Lower leg skin (tissue), 4 donors: ENCODE measurements at regions of chr5 and their contacts with region 1.

Region 1: DNA sequence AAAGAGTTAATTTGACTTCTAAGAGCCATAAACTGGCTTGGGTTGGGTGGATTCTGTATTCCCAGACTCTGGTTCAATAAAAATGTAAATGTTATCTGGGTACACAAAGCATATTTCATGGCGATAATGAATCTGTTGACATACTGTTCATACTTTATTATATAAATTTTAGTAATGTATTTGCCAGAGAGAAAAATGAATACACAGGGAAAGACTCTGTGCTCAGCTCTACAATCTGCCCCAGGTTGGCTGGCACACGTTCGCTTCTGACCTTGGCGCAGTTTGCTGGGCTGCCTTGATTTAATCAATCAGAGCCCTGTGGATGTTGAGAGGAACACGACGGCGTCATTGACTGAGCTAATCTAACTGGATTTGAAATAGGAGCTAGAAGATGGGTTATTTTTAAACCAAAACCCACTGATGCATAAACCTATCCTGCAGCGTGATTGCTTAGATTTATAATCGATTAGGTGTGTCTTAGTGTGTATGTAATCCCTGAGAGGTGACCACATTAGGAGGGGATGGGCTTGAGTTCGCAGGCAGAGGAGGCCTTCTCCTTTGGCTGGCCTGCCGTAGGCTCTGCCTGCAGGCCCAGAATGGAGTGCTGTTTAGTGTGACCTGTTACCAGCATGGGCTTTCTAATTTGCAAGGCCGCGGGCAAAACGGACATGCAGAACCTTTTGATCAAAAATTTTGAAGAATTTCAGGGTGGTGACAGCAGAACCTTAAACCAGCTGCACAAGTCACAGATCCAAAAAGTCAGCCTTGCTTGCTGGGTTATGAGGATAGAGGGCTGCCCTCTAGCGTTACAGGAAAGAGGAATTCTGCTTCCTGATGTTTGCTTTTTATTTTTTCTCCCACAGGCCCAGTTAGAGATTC is 3.9 kb upstream of the ADCY2 start:
- DNase-seq: peak in 1 of 2 donors; percentile 50
- H3K4me3 ChIP-seq: no peak overlapping the region
- CTCF ChIP-seq: no peak
- POLR2A ChIP-seq: no peak

Region 2: GRCh38 chr5:5826911-5827310 is 1565.1 kb before region 1 on chr5:
- intact Hi-C with region 1: no loop called
- DNase-seq: no peak
- H3K4me3 ChIP-seq: no peak overlapping the region
- CTCF ChIP-seq: no peak
- POLR2A ChIP-seq: no peak

Region 3: GRCh38 chr5:6765612-6766525 is 626.2 kb before region 1 on chr5:
- intact Hi-C with region 1: loop called (anchors 10 kb)
- DNase-seq: peak; percentile 69 to 95
- H3K4me3 ChIP-seq: no peak overlapping the region
- CTCF ChIP-seq: no peak
- POLR2A ChIP-seq: no peak

Region 4: GRCh38 chr5:6886866-6887265 is 505.2 kb before region 1 on chr5:
- intact Hi-C with region 1: no loop called
- DNase-seq: no peak
- H3K4me3 ChIP-seq: no peak overlapping the region
- CTCF ChIP-seq: no peak
- POLR2A ChIP-seq: no peak

Region 5: DNA sequence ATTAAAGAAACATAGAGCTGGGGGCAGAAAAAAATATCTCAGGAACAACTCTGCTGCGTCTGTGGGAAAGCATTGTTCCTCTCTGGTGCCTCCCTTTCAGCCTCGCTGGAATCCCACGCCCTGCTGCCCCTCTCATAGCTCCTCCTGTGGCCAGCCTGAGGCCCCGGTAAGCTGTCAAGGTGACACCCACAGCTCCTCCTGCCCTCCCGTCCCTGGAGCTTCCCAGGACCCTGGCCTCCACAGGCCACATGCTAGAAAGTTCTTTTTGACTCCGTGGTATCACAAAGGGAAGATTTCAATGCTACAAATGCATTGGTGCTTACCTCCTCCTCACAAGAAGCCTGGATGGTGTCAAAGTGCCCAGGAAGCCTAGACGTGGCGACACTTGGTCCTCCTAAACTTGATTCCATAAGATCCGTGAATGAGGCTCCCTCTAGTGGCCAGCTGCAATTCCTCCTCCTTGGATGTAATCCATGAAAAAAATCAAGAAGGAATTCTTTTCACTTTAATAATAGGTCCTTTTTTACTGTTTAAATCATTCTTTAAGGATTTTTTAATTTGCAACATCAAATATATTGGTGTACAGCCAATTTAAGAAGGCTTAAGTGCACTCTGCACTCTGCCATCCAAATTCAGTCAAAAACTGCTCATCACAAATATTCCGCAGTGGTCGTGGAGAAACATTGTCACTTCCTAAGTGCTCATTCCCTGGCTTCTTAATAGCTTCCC is 354.0 kb after region 1 on chr5:
- intact Hi-C with region 1: loop called (anchors 10 kb)
- DNase-seq: peak; percentile 70 to 92
- H3K4me3 ChIP-seq: no peak overlapping the region
- CTCF ChIP-seq: peak in 1 of 3 donors; percentile 37
- POLR2A ChIP-seq: no peak

Region 6: DNA sequence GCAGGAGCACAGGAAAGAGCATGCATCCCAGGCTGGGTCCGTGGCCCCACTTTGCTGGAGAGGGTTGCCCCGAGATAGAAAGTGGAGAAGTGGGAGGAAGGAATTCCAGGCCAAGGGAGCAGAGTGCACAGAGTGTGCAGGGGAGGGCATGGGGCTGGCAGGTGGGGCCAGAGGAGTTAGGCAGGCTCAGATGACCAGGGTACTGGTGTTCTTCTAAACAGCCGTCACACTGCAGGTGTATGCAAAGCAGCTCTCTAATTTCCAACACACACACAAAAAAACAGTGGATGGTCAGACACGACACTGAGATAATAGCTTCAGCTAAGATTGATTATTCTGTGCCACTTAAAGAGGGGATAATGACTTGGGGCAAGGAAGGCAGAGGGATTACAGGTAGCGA is 689.1 kb after region 1 on chr5:
- intact Hi-C with region 1: no loop called
- DNase-seq: no peak
- H3K4me3 ChIP-seq: no peak overlapping the region
- CTCF ChIP-seq: no peak
- POLR2A ChIP-seq: no peak